Esophagus muscularis mucosa (tissue), 4 donors: ENCODE measurements at regions of chr3 and their contacts with region 1.

Region 1: DNA sequence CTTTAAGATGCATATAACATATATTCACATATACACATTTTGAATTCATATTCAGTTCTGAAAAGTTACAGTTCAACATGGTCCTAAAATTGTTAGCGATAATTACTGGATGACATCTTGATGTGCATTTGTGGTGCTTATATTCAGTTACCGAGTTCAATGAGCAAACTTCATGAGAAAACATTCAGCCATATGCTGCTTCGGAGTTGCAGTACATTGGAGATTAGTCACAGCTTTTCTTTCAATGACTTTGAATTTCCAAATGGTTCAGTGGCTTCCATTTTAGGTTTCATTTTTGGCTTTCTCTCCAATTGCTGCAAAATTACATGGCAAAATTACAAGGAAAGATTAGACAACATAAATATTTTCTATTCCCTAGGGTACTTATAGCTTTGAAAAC is 198.3 kb upstream of the CNTN3 start:
- DNase-seq: no peak
- H3K4me3 ChIP-seq: no peak overlapping the region
- H3K27ac ChIP-seq: no peak overlapping the region
- H3K4me1 ChIP-seq: no peaks in the 10 kb centered on the region
- H3K27me3 ChIP-seq: no peaks in the 10 kb centered on the region
- CTCF ChIP-seq: no peak
- EP300 ChIP-seq: no peak
- POLR2A ChIP-seq: no peak

Region 2: GRCh38 chr3:74054566-74054965 is 758.2 kb before region 1 on chr3:
- intact Hi-C with region 1: loop called (anchors 10 kb)
- DNase-seq: no peak
- H3K4me3 ChIP-seq: no peak overlapping the region
- H3K27ac ChIP-seq: no peak overlapping the region
- H3K4me1 ChIP-seq: no peaks in the 10 kb centered on the region
- H3K27me3 ChIP-seq: no peaks in the 10 kb centered on the region
- CTCF ChIP-seq: no peak
- EP300 ChIP-seq: no peak
- POLR2A ChIP-seq: no peak